ENCODE measurements at regions of chr1 and their contacts with region 1.

Region 1: GRCh38 chr1:212699104-212699624 is 476 bp downstream of the BATF3 start:
- DNase-seq: peak; percentile 29 to 56 (median 35)
- H3K4me3 ChIP-seq: peak overlapping the region; percentile 13 to 46
- H3K4me3 Mint-ChIP-seq: peak overlapping the region; percentile 86 to 90 (median 88)
- H3K27ac ChIP-seq: no peak overlapping the region
- H3K27ac Mint-ChIP-seq: peak overlapping the region in 6 of 7 donors; percentile 11 to 87 (median 78)
- H3K4me1 ChIP-seq: peaks cover 42% of the 10 kb centered on the region
- H3K4me1 Mint-ChIP-seq: peaks cover 34 to 61% (median 49%) of the 10 kb centered on the region in 4 donors
- H3K27me3 ChIP-seq: no peaks in the 10 kb centered on the region
- H3K27me3 Mint-ChIP-seq: no peaks in the 10 kb centered on the region

Region 2: GRCh38 chr1:212558693-212559480 is 140.3 kb before region 1 on chr1:
- CTCF ChIA-PET with region 1: no interaction called
- POLR2A ChIA-PET with region 1: no interaction called
- intact Hi-C with region 1: loop called (anchors 2 kb)
- DNase-seq: peak; percentile 90 to 92 (median 91)
- H3K4me3 ChIP-seq: peak overlapping the region in 1 of 2 donors; percentile 64
- H3K4me3 Mint-ChIP-seq: peak overlapping the region; percentile 83 to 93 (median 86)
- H3K27ac ChIP-seq: peak overlapping the region; percentile 79
- H3K27ac Mint-ChIP-seq: peak overlapping the region; percentile 81 to 100 (median 99)
- H3K4me1 ChIP-seq: peaks cover 11% of the 10 kb centered on the region
- H3K4me1 Mint-ChIP-seq: peaks cover 2 to 16% (median 8%) of the 10 kb centered on the region in 4 donors
- H3K27me3 ChIP-seq: no peaks in the 10 kb centered on the region
- H3K27me3 Mint-ChIP-seq: peaks cover 4% of the 10 kb centered on the region in 2 donors

Region 3: DNA sequence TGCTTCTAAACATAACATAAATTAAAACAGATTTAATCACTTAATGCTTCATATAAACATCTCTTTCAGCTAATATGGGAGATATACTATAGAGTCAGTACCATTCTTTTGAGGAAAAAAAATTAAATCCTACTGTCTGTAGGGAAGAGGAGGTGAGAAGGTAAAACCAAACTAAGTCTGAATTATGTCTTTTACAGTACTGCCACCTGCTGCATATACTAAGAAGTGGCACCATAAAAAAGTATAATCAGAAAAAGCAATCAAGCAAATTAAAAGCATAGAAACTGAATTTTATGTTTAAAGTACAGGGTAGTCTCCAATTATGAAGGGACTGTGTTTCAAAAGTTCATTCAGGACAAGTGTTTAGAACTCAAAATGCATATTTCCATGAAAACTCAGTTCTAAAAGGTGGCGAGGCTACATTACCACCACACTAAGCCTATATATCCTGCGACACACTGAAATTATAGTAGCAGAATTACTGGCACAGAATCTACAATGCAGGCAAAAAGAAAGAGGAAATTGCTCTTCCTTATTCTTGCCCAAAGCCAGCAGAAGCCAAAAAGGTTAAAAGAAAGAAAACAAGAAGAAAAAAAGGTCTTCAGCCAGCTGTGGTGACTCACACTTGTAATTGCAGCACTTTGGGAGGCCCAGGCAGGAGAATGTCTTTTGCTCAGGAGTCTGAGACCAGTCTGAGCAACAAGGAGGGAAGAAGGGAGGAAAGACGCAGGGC is 83.4 kb after region 1 on chr1:
- CTCF ChIA-PET with region 1: interaction called, 9 read pairs
- POLR2A ChIA-PET with region 1: no interaction called
- intact Hi-C with region 1: loop called (anchors 1 kb)
- DNase-seq: peak in 4 of 5 donors; percentile 29 to 38 (median 32)
- H3K4me3 ChIP-seq: no peak overlapping the region
- H3K4me3 Mint-ChIP-seq: peak overlapping the region in 1 of 8 donors; percentile 10
- H3K27ac ChIP-seq: no peak overlapping the region
- H3K27ac Mint-ChIP-seq: peak overlapping the region in 3 of 7 donors; percentile 12 to 29 (median 17)
- H3K4me1 ChIP-seq: no peaks in the 10 kb centered on the region
- H3K4me1 Mint-ChIP-seq: peaks cover 2 to 8% (median 6%) of the 10 kb centered on the region in 4 donors
- H3K27me3 ChIP-seq: no peaks in the 10 kb centered on the region
- H3K27me3 Mint-ChIP-seq: no peaks in the 10 kb centered on the region